Caco-2 (cell line): ENCODE measurements at regions of chr3 and their contacts with region 1.

Region 1: DNA sequence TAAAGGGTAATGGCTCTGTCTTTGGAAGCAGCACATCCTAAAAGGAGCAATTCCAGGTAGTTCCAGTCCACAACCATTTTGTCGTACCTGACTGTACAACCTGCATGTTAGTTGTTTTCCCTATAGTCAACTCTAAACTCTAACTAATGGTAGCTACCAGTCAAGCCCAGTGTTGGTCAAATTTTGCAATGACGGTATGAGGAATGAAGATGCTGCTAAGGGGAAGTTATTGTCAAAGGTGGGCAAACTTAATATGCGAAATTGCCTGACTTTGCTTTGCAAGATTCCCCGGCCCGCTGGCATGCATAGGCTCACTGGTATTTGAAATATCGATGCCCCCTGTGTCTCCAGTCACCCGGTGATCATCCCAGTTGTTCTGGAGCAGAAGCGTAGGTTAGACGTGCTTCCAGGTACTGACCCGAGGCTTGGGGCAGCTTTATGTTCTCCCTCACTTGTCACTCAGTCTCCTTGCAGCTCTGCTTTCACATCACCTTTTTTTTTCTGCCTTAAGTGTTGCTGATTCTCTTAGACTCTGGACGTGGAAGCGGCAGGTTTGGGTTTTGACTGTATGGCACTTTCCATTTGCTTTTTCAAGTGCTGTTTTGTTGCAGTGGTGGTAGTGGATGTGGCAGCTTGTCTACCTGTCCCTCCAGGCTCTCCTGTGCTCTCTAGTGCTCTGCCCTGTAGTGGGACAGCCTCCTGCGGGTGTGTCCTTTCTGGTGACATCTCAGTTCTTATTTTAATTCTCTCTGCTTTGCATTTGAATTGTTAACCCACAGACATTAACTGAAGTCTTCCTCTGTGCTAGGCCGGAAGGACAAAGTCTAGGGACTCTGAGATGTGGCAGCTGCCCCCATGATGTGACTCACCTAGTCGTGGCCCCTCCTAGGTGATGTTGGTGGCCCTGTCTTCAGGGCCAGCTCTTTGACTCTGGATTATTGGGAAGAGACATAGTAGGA is 95.8 kb upstream of the UMPS start:
- DNase-seq: peak; percentile 40 to 77
- H3K4me3 ChIP-seq: no peak overlapping the region
- H3K4me3 Mint-ChIP-seq: peak overlapping the region; percentile 45
- H3K27ac Mint-ChIP-seq: peak overlapping the region; percentile 76
- H3K4me1 ChIP-seq: peaks cover 96% of the 10 kb centered on the region
- H3K4me1 Mint-ChIP-seq: peaks cover 74% of the 10 kb centered on the region
- H3K27me3 ChIP-seq: no peaks in the 10 kb centered on the region
- H3K27me3 Mint-ChIP-seq: no peaks in the 10 kb centered on the region
- CTCF ChIP-seq: no peak

Region 2: GRCh38 chr3:124064050-124064449 is 570.4 kb before region 1 on chr3:
- CTCF ChIA-PET with region 1: interaction called, 12 read pairs
- POLR2A ChIA-PET with region 1: no interaction called
- intact Hi-C with region 1: no loop called
- DNase-seq: no peak
- H3K4me3 ChIP-seq: no peak overlapping the region
- H3K4me3 Mint-ChIP-seq: no peak overlapping the region
- H3K27ac Mint-ChIP-seq: no peak overlapping the region
- H3K4me1 ChIP-seq: no peaks in the 10 kb centered on the region
- H3K4me1 Mint-ChIP-seq: no peaks in the 10 kb centered on the region
- H3K27me3 ChIP-seq: peaks cover 1% of the 10 kb centered on the region; the same call in 1 of the 2 replicates
- H3K27me3 Mint-ChIP-seq: peaks cover 7% of the 10 kb centered on the region
- CTCF ChIP-seq: no peak

Region 3: DNA sequence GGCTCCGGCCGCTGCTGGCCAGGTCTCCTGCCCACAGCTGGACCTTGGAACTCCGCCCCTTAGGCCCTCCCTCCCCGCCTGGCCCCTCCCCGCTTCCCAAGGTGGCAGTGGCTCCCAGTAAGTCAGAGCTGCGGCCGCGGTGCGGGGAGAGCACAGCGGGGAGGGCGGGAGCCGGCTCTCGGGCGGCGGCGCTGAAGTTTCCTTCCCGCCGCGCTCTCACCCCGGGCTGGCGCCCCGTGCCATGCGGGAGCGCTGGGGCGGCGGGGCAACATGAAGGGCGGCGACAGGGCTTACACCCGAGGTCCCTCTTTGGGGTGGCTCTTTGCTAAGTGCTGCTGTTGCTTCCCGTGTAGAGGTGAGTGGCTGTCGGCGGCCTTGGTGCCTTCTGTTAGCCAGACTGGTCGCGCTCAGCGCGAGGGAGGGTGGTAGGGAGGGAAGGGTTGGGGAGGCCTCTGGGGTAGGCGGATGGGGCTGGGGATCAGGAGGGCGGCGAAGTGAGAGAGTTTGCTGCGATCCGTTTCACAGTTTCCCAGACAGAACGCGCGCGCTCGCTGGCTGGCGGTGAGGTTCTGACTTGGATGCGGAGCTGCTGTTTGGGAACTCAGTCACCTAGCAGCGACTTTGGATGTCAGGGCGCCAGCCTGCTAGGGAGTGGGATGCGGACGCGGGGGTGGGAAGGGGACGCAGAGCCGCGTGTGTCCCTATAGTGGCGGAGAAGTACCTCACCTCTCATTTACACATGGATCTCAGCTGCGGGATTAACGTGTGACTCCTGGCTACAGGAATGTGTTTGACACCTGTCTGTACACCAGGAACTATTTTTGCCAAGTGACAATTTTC is 49.7 kb before region 1 on chr3:
- CTCF ChIA-PET with region 1: interaction called, 4 read pairs
- POLR2A ChIA-PET with region 1: interaction called, 3 read pairs
- intact Hi-C with region 1: loop called (anchors 1 kb)
- DNase-seq: peak; percentile 87 to 89
- H3K4me3 ChIP-seq: peak overlapping the region; percentile 47
- H3K4me3 Mint-ChIP-seq: peak overlapping the region; percentile 84
- H3K27ac Mint-ChIP-seq: peak overlapping the region; percentile 73
- H3K4me1 ChIP-seq: peaks cover 37% of the 10 kb centered on the region
- H3K4me1 Mint-ChIP-seq: peaks cover 21% of the 10 kb centered on the region
- H3K27me3 ChIP-seq: no peaks in the 10 kb centered on the region
- H3K27me3 Mint-ChIP-seq: no peaks in the 10 kb centered on the region
- CTCF ChIP-seq: no peak

Region 4: DNA sequence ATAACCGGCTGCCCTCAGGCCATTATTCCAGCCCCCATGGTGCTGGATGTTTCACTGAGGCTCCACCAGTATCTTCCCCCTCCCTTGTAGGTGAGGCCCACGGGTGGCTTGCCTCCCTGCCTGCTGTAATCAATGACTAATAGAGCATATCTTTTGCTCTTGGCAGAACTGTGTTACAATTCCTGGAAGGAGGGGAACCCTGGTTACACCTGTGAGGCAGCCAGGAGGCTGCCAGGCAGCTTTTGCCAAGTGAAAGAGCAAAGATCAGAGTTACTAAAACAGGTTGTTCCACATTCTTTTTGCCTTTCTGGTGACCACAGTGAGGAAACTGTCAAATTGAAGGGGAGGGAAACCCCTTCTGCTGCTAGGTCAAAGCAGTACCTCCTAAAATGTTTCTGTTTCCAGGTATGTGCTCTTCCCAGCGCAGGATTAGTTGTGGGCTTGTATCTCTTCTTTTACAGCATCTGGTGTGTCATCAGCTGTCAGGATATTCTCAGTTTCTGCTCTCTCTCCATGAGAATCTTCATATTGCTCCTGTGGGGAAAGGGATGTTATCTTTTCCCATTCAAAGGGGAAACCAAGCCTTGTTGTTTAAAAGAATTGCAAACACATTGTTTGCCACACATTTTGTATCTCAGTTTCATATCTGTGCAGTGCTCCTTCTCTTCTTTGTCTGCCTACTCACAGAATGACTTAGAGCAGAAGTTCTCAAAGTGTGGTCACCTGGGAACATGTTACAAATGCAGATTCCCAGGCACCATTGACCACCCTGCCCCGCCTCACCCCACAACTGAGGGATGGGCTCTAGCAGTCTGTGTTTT is 41.7 kb before region 1 on chr3:
- CTCF ChIA-PET with region 1: no interaction called
- POLR2A ChIA-PET with region 1: no interaction called
- intact Hi-C with region 1: loop called (anchors 1 kb)
- DNase-seq: peak; percentile 89 to 91
- H3K4me3 ChIP-seq: no peak overlapping the region
- H3K4me3 Mint-ChIP-seq: peak overlapping the region; percentile 69
- H3K27ac Mint-ChIP-seq: peak overlapping the region; percentile 95
- H3K4me1 ChIP-seq: peaks cover 70% of the 10 kb centered on the region
- H3K4me1 Mint-ChIP-seq: peaks cover 49% of the 10 kb centered on the region
- H3K27me3 ChIP-seq: no peaks in the 10 kb centered on the region
- H3K27me3 Mint-ChIP-seq: no peaks in the 10 kb centered on the region
- CTCF ChIP-seq: no peak

Region 5: GRCh38 chr3:124605781-124606579 is 28.5 kb before region 1 on chr3:
- CTCF ChIA-PET with region 1: no interaction called
- POLR2A ChIA-PET with region 1: no interaction called
- intact Hi-C with region 1: no loop called
- DNase-seq: no peak
- H3K4me3 ChIP-seq: no peak overlapping the region
- H3K4me3 Mint-ChIP-seq: no peak overlapping the region
- H3K27ac Mint-ChIP-seq: no peak overlapping the region
- H3K4me1 ChIP-seq: 0 out of 2 replicates have a peak, but pooled peaks cover 5% of the 10 kb centered on the region
- H3K4me1 Mint-ChIP-seq: peaks cover 35% of the 10 kb centered on the region
- H3K27me3 ChIP-seq: no peaks in the 10 kb centered on the region
- H3K27me3 Mint-ChIP-seq: no peaks in the 10 kb centered on the region
- CTCF ChIP-seq: no peak

Region 6: GRCh38 chr3:124707656-124708062 is 73.2 kb after region 1 on chr3:
- CTCF ChIA-PET with region 1: no interaction called
- POLR2A ChIA-PET with region 1: no interaction called
- intact Hi-C with region 1: no loop called
- DNase-seq: peak; percentile 53 to 61
- H3K4me3 ChIP-seq: no peak overlapping the region
- H3K4me3 Mint-ChIP-seq: peak overlapping the region; percentile 55
- H3K27ac Mint-ChIP-seq: peak overlapping the region; percentile 93
- H3K4me1 ChIP-seq: peaks cover 15% of the 10 kb centered on the region
- H3K4me1 Mint-ChIP-seq: peaks cover 13% of the 10 kb centered on the region
- H3K27me3 ChIP-seq: no peaks in the 10 kb centered on the region
- H3K27me3 Mint-ChIP-seq: no peaks in the 10 kb centered on the region
- CTCF ChIP-seq: no peak

Region 7: DNA sequence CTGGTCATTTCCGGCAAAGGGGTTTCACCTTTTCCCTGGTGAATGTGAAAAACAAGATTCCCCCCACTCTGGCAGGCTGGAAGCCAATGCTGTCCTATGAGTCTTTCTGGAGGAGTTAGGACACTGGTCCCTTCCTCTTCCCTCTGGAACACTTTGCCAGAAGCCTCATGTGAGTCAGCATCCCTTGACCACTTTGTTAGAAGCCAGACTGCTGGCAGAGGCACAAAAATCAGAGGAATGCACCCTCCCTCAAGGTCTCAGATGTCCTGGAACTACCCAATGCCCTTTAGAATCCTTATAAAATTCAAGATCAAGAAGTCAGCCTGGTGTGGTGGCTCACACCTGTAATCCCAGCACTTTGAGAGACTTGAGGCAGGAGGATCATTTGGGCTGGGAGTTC is 226.1 kb after region 1 on chr3:
- CTCF ChIA-PET with region 1: no interaction called
- POLR2A ChIA-PET with region 1: no interaction called
- intact Hi-C with region 1: no loop called
- DNase-seq: no peak
- H3K4me3 ChIP-seq: no peak overlapping the region
- H3K4me3 Mint-ChIP-seq: no peak overlapping the region
- H3K27ac Mint-ChIP-seq: no peak overlapping the region
- H3K4me1 ChIP-seq: no peaks in the 10 kb centered on the region
- H3K4me1 Mint-ChIP-seq: no peaks in the 10 kb centered on the region
- H3K27me3 ChIP-seq: no peaks in the 10 kb centered on the region
- H3K27me3 Mint-ChIP-seq: no peaks in the 10 kb centered on the region
- CTCF ChIP-seq: no peak